K562 (cell line): ENCODE measurements at regions of chr17 and their contacts with region 1.

Region 1: DNA sequence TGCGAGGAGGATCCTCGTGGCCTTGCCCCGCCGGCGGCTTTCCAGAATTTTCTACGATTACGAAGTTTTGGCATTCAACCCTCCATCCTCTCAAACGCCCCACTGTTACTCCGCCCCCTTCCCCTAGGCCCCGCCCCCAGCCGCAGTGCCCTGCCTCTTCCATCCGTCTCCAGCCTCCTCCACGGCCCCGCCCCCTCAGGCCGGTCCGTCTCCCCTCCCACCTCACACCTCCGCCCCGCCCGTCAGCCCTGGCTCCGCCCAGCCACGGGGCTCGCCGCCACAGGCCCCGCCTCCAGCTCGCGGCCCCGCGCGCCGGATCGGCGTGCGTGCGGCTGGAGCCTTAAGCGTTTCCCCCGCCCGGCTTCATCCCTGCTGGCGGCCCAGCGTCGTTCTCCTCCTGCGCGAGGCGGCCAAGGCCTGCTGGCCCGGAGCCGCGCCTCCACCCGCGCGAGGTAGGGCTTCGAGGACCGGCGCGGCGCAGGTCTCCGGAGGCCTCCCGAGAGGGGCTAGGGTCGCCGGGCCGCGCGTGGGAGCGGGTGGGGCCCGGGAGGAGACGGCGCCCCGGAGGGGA is at the starts of genes C17orf67 and DGKE:
- DNase-seq: peak; percentile 96 to 98 (median 98)
- ATAC-seq: peak; percentile 94
- H3K4me3 ChIP-seq: peak within 1 kb of the TSS; percentile 75
- H3K27ac ChIP-seq: peak within 1 kb of the TSS; percentile 70
- H3K4me1 ChIP-seq: peaks cover 15 to 24% of the 10 kb centered on the region in 2 experiments; a peak in 4 of 5 replicates
- H3K27me3 ChIP-seq: no peaks in the 10 kb centered on the region
- CTCF ChIP-seq: peak in 1 of 3 experiments; percentile 8; a peak in 1 of 6 replicates
- EP300 ChIP-seq: no peak
- POLR2A ChIP-seq: peak; percentile 71
- RAD21 ChIP-seq: no peak
- polyA plus RNA-seq, gene C17orf67: 0.07 to 0.08 TPM
- polyA plus RNA-seq, gene DGKE: 1.3 to 2.0 TPM

Region 2: DNA sequence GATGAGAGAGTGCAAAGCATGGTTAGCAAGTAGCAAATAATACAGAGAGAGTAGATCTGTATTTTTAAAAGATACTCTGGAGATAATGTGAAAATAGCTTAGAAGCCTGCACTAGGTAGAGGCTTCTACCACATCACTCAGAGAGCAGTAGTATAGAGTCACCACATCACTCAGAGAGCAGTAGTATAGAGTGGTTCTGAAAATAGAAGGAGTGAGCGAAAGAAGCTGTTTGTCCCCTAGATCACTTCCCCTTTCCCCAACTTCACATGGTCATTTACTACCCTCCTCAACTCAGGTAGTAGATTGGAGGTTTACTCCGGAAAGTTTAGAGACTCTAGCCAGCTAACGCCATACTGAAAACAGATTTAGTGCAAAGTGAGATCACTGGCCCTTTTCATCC is 17.1 kb after region 1 on chr17:
- CTCF ChIA-PET with region 1: no interaction called
- POLR2A ChIA-PET with region 1: interaction called, 24 read pairs
- in situ Hi-C with region 1: no loop called
- intact Hi-C with region 1: no loop called
- DNase-seq: no peak
- ATAC-seq: no peak
- H3K4me3 ChIP-seq: no peak overlapping the region
- H3K27ac ChIP-seq: no peak overlapping the region
- H3K4me1 ChIP-seq: no peaks in the 10 kb centered on the region
- H3K27me3 ChIP-seq: no peaks in the 10 kb centered on the region
- CTCF ChIP-seq: no peak
- EP300 ChIP-seq: no peak
- POLR2A ChIP-seq: no peak
- RAD21 ChIP-seq: no peak

Region 3: DNA sequence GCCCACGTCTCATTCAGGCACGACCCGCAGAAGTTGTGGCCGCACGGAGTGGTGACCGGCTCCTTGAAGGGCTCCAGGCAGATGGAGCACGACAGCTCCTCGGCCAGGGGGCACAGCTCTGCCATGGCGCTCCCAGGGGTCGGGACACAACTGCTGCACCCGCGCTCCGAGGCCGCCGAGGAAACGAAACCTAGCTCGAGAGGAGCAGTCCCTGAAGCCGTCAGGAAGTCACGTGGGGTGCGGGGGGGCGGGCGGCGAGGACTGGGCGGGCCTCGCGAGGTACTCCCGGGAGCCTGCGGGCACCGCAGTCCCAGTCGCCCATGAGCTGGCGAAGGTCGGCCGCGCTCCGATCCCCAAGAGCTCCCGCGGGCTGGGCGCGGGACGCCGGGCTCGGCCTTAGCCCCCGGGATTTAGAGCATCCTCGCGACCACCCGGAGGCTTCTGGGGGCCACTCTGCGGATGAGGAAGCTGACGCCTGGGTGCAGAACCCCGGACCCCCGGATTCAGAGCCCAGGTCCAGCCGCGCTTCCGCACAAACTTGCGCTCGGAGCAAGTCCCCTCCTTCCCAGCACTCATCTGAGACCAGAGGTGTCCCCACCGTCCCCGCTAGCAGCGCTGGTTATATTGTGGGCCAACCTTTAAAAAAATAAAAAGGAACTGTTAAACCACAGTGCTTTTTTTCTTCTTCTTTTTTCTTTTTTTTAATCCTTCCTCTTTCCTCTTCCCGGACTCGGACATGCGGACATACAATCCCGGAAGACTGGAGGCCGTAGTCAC is 80.2 kb after region 1 on chr17 and contains the start of gene TRIM25:
- CTCF ChIA-PET with region 1: no interaction called
- POLR2A ChIA-PET with region 1: interaction called, 5 read pairs
- in situ Hi-C with region 1: no loop called
- intact Hi-C with region 1: loop called (anchors 5 kb)
- DNase-seq: peak; percentile 94 to 98 (median 94)
- ATAC-seq: peak; percentile 86
- H3K4me3 ChIP-seq: peak within 1 kb of the TSS; percentile 72
- H3K27ac ChIP-seq: peak within 1 kb of the TSS; percentile 88
- H3K4me1 ChIP-seq: peaks cover 42 to 45% of the 10 kb centered on the region in 2 experiments
- H3K27me3 ChIP-seq: no peaks in the 10 kb centered on the region
- CTCF ChIP-seq: no peak
- EP300 ChIP-seq: no peak; the same call in 1 of the 2 replicates
- POLR2A ChIP-seq: peak; percentile 99
- RAD21 ChIP-seq: no peak
- polyA plus RNA-seq, gene TRIM25: 5.9 to 8.5 TPM